ENCODE measurements at regions of chr16 and their contacts with region 1.

Region 1: DNA sequence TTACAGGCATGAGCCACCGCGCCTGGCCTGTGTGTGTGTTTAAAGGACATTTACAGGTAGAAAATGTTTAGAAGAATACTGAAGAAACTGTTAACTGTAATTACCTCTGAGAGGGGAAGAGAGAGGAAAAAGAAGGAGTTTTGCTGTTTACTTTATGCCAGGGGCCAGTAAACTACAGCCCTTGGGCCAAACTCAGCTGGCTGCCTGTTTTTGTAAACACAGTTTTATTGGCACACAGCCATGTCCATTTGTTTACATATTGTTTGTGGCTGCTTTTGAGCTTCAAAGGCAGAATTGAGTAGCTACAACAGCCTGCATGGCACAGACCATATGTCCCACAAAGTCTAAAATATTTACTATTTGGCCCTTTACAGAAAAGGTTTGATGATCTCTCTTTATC is 76.4 kb downstream of the GPR139 start:
- DNase-seq: no peak

Region 2: DNA sequence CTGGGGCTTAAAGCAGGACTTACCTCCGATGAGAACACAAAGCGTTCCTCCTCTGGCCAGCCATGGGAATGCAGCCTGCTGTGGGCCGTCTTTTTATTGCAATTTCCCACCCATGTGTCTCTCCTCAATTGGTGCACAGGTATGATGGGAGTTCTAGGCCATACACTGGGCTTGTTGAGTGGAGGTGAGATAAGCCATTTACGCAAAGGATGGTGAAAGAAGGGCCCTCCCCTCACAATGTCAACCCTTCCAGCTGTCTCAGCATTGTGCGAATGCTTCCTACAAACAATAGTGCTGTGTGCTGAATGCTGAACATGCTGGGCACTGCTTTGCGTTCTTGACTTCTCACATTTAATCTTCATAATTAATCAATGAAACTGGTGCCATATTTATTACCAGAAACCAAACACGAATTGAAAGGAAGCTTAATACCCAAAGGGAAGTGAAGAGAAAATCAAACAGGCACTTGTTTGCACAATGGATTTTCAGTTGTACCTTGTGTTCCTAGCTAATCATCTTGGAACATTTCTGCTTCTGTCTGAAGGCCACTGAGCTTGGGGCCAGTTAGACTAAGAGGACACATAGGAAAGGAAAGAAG is 330.3 kb after region 1 on chr16 and contains the start of gene GP2:
- intact Hi-C with region 1: loop called in 1 of 2 experiments (anchors 5 kb)
- DNase-seq: no peak
- total RNA-seq, gene GP2: 0.51 to 4.9 TPM